ENCODE measurements at regions of chr19 and their contacts with region 1.

Region 1: GRCh38 chr19:44841231-44841630 is 4.9 kb upstream of the NECTIN2 start:
- DNase-seq: no peak
- ATAC-seq: no peak

Region 2: DNA sequence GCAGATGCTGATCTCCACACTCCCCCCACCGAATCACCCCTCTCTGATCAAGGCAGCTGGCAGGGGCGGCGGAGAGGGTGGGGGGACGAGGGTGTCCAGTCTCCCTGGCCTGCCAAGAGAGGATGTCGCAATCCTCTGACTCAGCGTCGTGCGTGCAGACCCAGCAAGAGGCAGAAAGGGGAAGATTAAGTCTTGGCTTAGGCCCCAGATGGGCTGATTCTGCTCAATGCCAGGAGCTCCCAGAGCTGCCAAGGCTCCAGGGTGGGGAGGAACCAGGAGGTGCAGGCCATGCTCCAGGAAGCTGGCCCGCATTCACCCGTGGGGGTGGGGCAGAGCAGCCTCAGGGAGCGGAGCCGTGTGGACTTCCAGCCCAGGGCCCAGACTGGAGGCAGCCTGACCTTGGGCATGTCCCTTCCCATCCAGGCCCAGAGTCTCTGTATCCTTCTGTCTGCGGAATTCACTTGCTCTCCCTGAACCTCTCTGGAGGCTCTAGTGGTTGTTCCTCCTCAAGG is 99.3 kb before region 1 on chr19:
- intact Hi-C with region 1: no loop called
- DNase-seq: peak; percentile 98
- ATAC-seq: peak; percentile 97

Region 3: GRCh38 chr19:44789943-44790483 is 51.2 kb before region 1 on chr19:
- intact Hi-C with region 1: loop called (anchors 5 kb)
- DNase-seq: no peak
- ATAC-seq: no peak

Region 4: GRCh38 chr19:44800461-44800860 is 40.8 kb before region 1 on chr19:
- intact Hi-C with region 1: loop called (anchors 5 kb)
- DNase-seq: peak; percentile 93
- ATAC-seq: peak; percentile 97

Region 5: GRCh38 chr19:44856421-44857083 is 15.3 kb after region 1 on chr19:
- intact Hi-C with region 1: no loop called
- DNase-seq: no peak
- ATAC-seq: peak; percentile 82